IMR-90 (cell line): ENCODE measurements at regions of chr19 and their contacts with region 1.

Region 1: DNA sequence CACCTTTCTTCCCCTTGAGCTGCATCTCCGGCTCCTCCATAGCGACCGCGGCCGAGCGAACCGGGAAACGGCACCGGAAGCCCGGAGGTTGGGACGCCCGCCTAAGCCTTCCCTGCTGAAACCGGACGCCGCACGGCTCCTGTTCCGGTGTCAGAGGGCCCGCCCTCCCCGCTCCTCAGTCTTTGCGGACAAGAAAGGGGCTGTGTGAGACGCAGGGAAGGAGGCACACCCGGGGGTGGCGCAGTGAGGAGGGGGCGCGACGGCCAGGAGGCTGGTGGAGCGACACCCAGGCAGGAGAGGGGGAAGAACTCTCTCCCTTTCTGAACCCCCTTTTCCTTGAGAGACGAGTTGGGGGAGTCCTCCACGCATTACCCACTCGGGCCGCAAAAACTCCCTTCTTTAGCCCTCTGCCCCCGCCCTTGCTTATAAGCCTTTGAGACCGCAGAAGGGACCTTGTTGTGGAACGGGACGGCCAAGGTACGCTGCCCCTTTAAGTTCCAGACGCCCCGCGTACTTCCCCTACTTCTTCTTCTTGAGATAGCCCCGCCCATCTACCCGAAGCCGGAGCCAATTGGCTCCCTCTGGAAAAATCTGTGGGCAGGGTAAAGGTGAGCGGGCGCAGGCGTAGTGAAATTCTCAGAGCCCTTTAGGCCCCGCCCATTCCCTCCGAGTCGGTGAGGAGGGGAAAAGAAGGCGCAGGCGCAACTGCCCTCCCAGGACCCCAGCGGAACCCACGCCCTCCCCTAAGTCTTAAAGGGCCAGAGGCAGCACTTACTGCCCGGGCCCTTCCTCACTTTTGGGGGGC is at the starts of genes BORCS8 and RFXANK:
- DNase-seq: peak; percentile 98
- ATAC-seq: peak; percentile 95
- H3K4me3 ChIP-seq: peak within 1 kb of the TSS; percentile 96
- H3K27ac ChIP-seq: peak within 1 kb of the TSS; percentile 98
- H3K4me1 ChIP-seq: peaks cover 6% of the 10 kb centered on the region; the same call in 1 of the 2 replicates
- H3K27me3 ChIP-seq: no peaks in the 10 kb centered on the region
- CTCF ChIP-seq: no peak
- POLR2A ChIP-seq: no peak
- RAD21 ChIP-seq: no peak
- total RNA-seq, gene BORCS8: 14.7 and 16.7 TPM in 2 replicates
- total RNA-seq, gene RFXANK: 61.4 and 68.3 TPM in 2 replicates

Region 2: GRCh38 chr19:17599780-17600179 is 1592.5 kb before region 1 on chr19:
- CTCF ChIA-PET with region 1: no interaction called
- POLR2A ChIA-PET with region 1: interaction called, 15 read pairs
- dilution Hi-C with region 1: no loop called
- in situ Hi-C with region 1: no loop called
- intact Hi-C with region 1: no loop called
- DNase-seq: no peak
- ATAC-seq: no peak
- H3K4me3 ChIP-seq: no peak overlapping the region
- H3K27ac ChIP-seq: no peak overlapping the region
- H3K4me1 ChIP-seq: no peaks in the 10 kb centered on the region
- H3K27me3 ChIP-seq: peaks cover 33% of the 10 kb centered on the region
- CTCF ChIP-seq: no peak
- POLR2A ChIP-seq: no peak
- RAD21 ChIP-seq: no peak

Region 3: GRCh38 chr19:18919086-18919899 is 273.0 kb before region 1 on chr19 and contains the starts of genes COPE and DDX49:
- CTCF ChIA-PET with region 1: no interaction called
- POLR2A ChIA-PET with region 1: no interaction called
- dilution Hi-C with region 1: no loop called
- in situ Hi-C with region 1: no loop called
- intact Hi-C with region 1: no loop called
- DNase-seq: peak; percentile 100
- ATAC-seq: peak; percentile 98
- H3K4me3 ChIP-seq: peak within 1 kb of the TSS; percentile 72
- H3K27ac ChIP-seq: peak within 1 kb of the TSS; percentile 83
- H3K4me1 ChIP-seq: peaks cover 5% of the 10 kb centered on the region
- H3K27me3 ChIP-seq: no peaks in the 10 kb centered on the region
- CTCF ChIP-seq: no peak
- POLR2A ChIP-seq: peak; percentile 96
- RAD21 ChIP-seq: no peak
- total RNA-seq, gene COPE: 310 and 347 TPM in 2 replicates
- total RNA-seq, gene DDX49: 50.9 and 55.8 TPM in 2 replicates

Region 4: GRCh38 chr19:19203012-19203856 is 11.0 kb after region 1 on chr19 and contains the start of gene NR2C2AP:
- CTCF ChIA-PET with region 1: interaction called, 3 read pairs
- POLR2A ChIA-PET with region 1: interaction called, 26 read pairs
- dilution Hi-C with region 1: no loop called
- in situ Hi-C with region 1: no loop called
- intact Hi-C with region 1: no loop called
- DNase-seq: peak; percentile 83
- ATAC-seq: peak; percentile 92
- H3K4me3 ChIP-seq: peak within 1 kb of the TSS; percentile 54
- H3K27ac ChIP-seq: peak within 1 kb of the TSS; percentile 45; the same call in 1 of the 2 replicates
- H3K4me1 ChIP-seq: peaks cover 3% of the 10 kb centered on the region; the same call in 1 of the 2 replicates
- H3K27me3 ChIP-seq: peaks cover 10% of the 10 kb centered on the region; the same call in 1 of the 2 replicates
- CTCF ChIP-seq: no peak
- POLR2A ChIP-seq: no peak
- RAD21 ChIP-seq: no peak
- total RNA-seq, gene NR2C2AP: 5.4 and 6.9 TPM in 2 replicates

Region 5: GRCh38 chr19:19269952-19270694 is 77.8 kb after region 1 on chr19:
- CTCF ChIA-PET with region 1: no interaction called
- POLR2A ChIA-PET with region 1: no interaction called
- dilution Hi-C with region 1: no loop called
- in situ Hi-C with region 1: no loop called
- intact Hi-C with region 1: no loop called
- DNase-seq: no peak
- ATAC-seq: no peak
- H3K4me3 ChIP-seq: no peak overlapping the region
- H3K27ac ChIP-seq: no peak overlapping the region
- H3K4me1 ChIP-seq: no peaks in the 10 kb centered on the region
- H3K27me3 ChIP-seq: peaks cover 4% of the 10 kb centered on the region; the same call in 1 of the 2 replicates
- CTCF ChIP-seq: no peak
- POLR2A ChIP-seq: no peak
- RAD21 ChIP-seq: no peak

Region 6: DNA sequence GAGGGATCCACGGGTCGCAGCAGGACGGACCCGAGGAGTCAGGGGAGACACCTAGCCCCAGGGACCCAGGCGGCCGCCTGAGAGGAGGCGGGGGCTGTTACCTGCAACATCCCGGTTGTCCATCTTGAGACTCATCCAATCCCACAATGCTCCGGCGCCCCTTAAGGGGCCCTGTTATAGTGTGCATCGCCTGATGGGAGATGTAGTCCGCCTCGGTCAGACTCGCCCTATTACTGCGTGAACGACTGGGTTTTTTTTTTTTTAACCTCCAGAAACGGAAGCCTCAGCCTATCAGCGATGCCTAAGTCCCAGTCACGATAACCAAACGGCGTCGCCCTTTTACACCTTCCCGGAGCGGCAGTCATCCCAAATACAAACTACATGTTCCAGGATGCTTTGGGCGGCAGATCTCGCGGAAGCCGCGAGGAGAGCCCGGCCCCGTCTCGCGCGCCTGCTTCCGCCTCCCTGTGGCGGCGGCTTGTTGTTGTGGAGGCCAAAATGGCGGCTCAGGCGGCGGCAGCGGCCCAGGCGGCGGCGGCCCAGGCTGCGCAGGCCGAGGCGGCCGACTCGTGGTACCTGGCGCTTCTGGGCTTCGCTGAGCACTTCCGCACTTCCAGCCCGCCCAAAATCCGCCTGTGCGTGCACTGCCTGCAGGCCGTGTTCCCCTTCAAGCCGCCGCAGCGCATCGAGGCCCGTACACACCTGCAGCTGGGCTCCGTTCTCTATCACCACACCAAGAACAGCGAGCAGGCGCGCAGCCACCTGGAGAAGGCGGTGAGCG is 128.3 kb after region 1 on chr19 and contains the starts of genes MAU2 and SUGP1:
- CTCF ChIA-PET with region 1: no interaction called
- POLR2A ChIA-PET with region 1: no interaction called
- dilution Hi-C with region 1: no loop called
- in situ Hi-C with region 1: no loop called
- intact Hi-C with region 1: loop called (anchors 2 kb)
- DNase-seq: peak; percentile 90
- ATAC-seq: peak; percentile 95
- H3K4me3 ChIP-seq: peak within 1 kb of the TSS; percentile 78
- H3K27ac ChIP-seq: peak within 1 kb of the TSS; percentile 96
- H3K4me1 ChIP-seq: peaks cover 5% of the 10 kb centered on the region
- H3K27me3 ChIP-seq: no peaks in the 10 kb centered on the region
- CTCF ChIP-seq: peak; percentile 36
- POLR2A ChIP-seq: peak; percentile 73
- RAD21 ChIP-seq: no peak
- total RNA-seq, gene MAU2: 21.7 and 24.6 TPM in 2 replicates
- total RNA-seq, gene SUGP1: 35.8 and 38.3 TPM in 2 replicates